ENCODE measurements at regions of chr16 and their contacts with region 1.

Region 1: GRCh38 chr16:1296688-1297412 is 12.6 kb upstream of the UBE2I start:
- DNase-seq: peak in 1 of 4 experiments; percentile 54
- ATAC-seq: no peak
- H3K4me3 ChIP-seq: no peak overlapping the region
- H3K27ac ChIP-seq: peak overlapping the region; percentile 48; the same call in 2 of the 3 replicates
- H3K4me1 ChIP-seq: peaks cover 37% of the 10 kb centered on the region in 2 experiments
- H3K27me3 ChIP-seq: no peaks in the 10 kb centered on the region
- CTCF ChIP-seq: no peak
- EP300 ChIP-seq: peak; percentile 87
- POLR2A ChIP-seq: no peak
- RAD21 ChIP-seq: no peak

Region 2: GRCh38 chr16:1342526-1343427 is 45.9 kb after region 1 on chr16:
- CTCF ChIA-PET with region 1: no interaction called
- POLR2A ChIA-PET with region 1: no interaction called
- in situ Hi-C with region 1: no loop called
- intact Hi-C with region 1: loop called (anchors 10 kb)
- DNase-seq: peak; percentile 98 to 100 (median 100)
- ATAC-seq: peak; percentile 98
- H3K4me3 ChIP-seq: no peak overlapping the region
- H3K27ac ChIP-seq: no peak overlapping the region
- H3K4me1 ChIP-seq: peaks cover 6 to 89% of the 10 kb centered on the region in 2 experiments
- H3K27me3 ChIP-seq: no peaks in the 10 kb centered on the region
- CTCF ChIP-seq: no peak
- EP300 ChIP-seq: no peak
- POLR2A ChIP-seq: no peak
- RAD21 ChIP-seq: no peak

Measured in K562 (cell line).